ENCODE measurements at regions of chr7 and their contacts with region 1.

Region 1: GRCh38 chr7:99949638-99950228 is 20.3 kb upstream of the GJC3 start:
- DNase-seq: no peak
- H3K4me3 Mint-ChIP-seq: no peak overlapping the region
- H3K27ac Mint-ChIP-seq: no peak overlapping the region
- H3K4me1 Mint-ChIP-seq: peaks cover 8% of the 10 kb centered on the region
- H3K27me3 Mint-ChIP-seq: no peaks in the 10 kb centered on the region

Region 2: DNA sequence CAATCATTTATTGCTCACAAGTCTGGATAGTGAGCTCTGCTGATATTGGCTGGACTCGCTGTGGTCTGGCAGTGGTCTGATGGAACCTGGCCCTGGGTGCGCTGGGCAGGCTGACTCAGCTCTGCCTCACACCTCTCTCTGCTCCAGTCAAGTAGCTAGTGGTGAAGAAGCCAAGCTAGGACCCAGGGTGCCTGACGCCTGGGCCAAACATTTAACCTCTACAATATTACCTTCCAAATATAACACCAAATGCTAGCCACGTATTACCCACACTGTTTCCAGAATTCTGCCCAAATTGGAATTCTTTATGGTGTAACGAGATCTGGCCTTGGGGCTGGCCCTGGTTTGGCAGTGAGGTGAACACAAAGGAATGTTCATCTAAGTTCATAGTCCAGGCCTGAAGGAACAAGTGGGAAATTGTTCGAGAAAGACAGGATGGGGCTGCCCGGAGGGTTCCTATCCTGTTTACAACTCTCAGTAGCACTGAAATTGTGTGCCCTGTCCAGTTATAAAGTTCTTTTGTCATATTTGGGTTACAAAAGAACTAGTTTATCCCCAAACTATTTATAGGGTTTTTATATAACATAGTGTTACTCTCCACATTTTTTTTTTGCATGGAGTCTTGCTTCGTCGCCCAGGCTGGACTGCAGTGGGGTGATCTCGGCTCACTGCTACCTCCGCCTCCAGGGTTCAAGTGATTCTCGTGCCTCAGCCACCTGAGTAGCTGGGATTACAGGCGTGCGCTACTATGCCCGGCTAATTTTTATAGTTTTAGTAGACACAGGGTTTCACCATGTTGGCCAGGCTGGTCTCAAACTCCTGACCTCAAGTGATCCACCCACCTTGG is 89.2 kb before region 1 on chr7:
- CTCF ChIA-PET with region 1: no interaction called
- intact Hi-C with region 1: no loop called
- DNase-seq: no peak
- H3K4me3 Mint-ChIP-seq: no peak overlapping the region
- H3K27ac Mint-ChIP-seq: no peak overlapping the region
- H3K4me1 Mint-ChIP-seq: no peaks in the 10 kb centered on the region
- H3K27me3 Mint-ChIP-seq: peaks cover 3% of the 10 kb centered on the region

Region 3: DNA sequence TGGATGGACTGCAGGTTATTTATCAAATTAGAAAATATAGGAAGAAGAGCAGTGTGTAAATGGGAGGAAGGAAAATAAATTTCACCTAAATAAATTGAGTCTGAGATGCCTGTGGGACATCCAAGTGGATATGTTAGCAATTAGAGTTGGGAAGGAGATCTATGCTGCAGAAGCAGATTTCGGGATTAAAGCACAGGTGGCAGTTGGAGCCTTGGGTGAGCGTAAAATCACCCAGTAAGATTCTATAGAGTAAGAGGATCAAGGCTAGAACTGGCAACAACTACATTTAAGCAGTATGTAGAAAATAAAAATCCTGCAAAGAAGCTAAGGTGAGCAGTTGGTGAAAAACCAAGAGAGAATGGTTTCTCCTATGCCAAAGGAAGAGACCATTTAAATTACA is 38.8 kb before region 1 on chr7:
- CTCF ChIA-PET with region 1: interaction called, 14 read pairs
- intact Hi-C with region 1: loop called (anchors 1 kb)
- DNase-seq: no peak
- H3K4me3 Mint-ChIP-seq: no peak overlapping the region
- H3K27ac Mint-ChIP-seq: no peak overlapping the region
- H3K4me1 Mint-ChIP-seq: peaks cover 41% of the 10 kb centered on the region
- H3K27me3 Mint-ChIP-seq: no peaks in the 10 kb centered on the region

Region 4: DNA sequence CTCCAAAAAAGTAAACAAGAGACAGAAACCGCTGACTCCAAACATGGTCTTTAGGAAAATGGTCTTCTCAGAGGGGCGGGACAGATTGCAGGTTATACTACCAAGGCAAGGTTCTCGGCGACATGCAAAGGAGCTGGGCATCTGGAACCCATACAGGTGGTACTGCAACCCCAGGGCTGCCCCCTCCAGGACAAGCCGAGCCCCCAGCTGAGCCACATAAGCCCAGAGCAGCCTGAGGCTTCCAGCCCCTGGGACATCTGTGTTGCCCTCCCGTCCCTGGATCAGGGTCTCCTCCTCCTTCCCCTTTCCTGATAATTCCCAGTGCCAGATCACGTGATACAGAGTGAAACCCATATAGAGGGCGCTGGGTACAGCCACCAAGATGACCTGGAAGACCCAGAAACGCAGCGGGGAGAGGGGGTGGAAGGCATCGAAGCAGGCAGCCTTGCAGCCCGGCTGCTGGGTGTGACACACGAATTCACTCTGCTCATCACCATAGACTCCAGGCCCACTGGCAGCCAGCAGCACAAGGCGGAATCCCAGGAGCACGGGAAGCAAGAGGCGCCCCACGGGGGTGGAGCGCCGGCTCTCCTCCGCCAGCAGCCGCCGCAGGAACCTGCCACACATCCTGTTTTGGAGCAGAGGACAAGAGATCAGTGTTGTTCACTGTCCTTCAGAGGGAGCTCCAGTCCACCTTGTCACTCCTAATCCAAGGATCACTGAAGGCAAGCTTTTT is 20.6 kb before region 1 on chr7 and contains the start of gene GJC3:
- CTCF ChIA-PET with region 1: interaction called, 3 read pairs
- intact Hi-C with region 1: loop called (anchors 1 kb)
- DNase-seq: peak; percentile 72
- H3K4me3 Mint-ChIP-seq: peak within 1 kb of the TSS; percentile 66
- H3K27ac Mint-ChIP-seq: peak within 1 kb of the TSS; percentile 46
- H3K4me1 Mint-ChIP-seq: peaks cover 23% of the 10 kb centered on the region
- H3K27me3 Mint-ChIP-seq: no peaks in the 10 kb centered on the region
- total RNA-seq, gene GJC3: 0.62 to 1.1 TPM